HEK293T (cell line): ENCODE measurements at regions of chr22 and their contacts with region 1.

Region 1: DNA sequence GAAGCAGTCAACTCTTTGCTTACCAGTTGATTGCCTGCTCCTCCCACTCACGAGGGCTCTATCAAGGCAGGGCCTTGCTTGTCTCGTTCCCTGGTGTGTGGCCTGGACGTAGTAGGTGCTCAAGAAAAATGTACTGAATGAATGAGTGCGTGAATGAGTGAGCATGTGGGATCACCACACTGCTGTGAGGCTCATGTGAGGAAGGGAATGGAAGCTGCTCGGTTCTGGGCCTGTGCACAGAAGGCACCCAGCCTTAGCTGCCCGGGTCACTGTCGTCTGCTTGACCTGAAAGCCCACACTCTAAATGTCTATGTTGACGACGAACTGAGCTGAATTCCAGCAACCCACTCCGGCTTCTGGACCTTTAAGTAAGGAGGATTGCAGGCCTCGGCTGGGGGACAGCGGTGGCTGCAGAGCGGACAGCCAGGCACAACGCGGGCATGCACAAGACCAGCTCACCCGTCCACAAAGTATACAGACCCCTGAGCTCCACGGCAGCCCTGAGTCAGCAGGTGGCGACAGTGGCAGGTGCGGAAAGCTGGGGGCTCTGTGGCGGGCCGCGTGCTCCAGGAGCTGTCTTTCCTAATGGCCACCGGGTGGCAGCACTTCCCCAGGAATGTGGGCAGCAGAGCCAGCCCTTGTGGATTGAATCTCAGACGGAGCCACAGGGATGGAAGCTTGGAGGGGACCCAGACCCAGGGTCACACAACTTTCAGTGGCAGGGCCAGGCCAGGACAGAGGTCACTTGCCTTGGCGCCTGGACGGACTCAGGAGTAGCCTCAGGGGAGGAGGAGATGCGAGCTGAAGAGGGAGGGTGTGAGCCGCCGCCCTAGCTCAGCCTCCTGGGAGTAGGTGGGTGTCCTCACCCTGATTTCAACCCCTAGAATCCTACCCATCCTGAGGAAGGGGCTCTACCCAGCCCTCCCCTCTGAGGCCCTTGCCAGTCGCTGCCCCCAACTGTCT is 5.0 kb upstream of the PICK1 start:
- DNase-seq: peak; percentile 96

Region 2: GRCh38 chr22:38034274-38034882 is 17.8 kb before region 1 on chr22:
- CTCF ChIA-PET with region 1: interaction called, 10 read pairs
- POLR2A ChIA-PET with region 1: no interaction called
- DNase-seq: peak; percentile 63

Region 3: DNA sequence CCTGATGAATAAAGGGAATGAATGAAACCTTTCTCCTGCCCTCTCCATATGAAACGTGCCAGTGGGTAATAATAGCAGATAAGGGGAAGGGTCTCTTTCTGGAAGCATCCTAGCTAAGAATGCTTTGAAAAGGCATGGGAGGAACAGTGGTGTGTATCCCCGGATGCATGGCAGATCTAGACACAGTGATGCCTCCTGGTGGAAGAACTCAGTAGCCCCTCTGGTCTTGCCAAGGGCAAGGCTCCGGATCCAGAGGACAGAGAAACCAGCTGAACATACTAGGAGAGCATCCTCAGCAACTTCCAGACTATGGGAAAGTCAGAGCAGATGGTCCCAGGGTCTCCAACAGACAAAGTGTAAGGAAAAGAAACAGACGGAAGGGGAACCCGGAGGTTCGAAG is 51.9 kb after region 1 on chr22:
- CTCF ChIA-PET with region 1: interaction called, 11 read pairs
- POLR2A ChIA-PET with region 1: no interaction called
- DNase-seq: peak; percentile 76

Region 4: DNA sequence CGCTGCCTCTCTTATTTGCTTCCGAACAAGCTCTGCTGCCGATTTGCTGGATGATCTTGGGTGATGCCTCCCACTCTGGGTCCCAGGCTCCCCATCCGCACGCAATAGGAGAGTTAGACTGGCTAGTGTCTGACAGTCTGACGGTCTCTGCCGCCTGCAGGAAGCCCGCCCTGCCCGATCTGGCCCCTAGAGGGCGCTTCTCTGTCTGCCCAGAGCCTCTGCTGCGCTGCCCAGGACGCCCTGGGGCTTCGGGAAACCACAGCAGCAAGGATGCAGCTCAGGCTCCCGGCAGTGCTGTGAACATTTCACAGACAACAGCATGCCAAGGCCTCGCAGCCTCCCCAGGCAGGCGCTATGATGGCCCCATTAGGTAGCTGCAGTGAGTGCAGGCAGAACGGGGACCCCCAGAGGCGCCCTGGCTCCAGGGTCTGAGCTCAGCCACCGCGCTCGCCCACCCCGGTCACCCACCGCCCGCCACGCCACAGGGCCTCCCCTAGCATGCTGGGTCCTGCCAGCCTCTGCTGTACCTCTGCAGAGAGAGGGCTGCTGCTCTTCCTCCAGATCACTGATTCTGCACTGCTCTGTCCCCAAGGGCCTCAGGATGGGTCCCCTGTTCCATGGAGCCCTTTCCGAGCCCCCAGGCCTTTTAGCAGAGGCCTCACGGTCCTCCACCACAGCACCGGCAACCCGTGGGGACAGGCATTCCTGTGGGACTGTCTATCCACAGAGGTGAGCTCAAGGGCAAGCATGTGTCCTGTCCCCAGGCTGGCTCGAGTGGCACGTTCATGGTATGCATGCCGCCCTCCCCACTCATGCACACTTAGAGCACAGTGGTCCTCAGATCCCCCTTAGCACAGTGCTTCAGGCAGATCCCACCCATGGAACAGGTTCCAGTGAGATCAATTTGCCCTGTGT is 62.6 kb after region 1 on chr22:
- CTCF ChIA-PET with region 1: interaction called, 15 read pairs
- POLR2A ChIA-PET with region 1: no interaction called
- DNase-seq: peak; percentile 96